ENCODE measurements at regions of chr4 and their contacts with region 1.

Region 1: DNA sequence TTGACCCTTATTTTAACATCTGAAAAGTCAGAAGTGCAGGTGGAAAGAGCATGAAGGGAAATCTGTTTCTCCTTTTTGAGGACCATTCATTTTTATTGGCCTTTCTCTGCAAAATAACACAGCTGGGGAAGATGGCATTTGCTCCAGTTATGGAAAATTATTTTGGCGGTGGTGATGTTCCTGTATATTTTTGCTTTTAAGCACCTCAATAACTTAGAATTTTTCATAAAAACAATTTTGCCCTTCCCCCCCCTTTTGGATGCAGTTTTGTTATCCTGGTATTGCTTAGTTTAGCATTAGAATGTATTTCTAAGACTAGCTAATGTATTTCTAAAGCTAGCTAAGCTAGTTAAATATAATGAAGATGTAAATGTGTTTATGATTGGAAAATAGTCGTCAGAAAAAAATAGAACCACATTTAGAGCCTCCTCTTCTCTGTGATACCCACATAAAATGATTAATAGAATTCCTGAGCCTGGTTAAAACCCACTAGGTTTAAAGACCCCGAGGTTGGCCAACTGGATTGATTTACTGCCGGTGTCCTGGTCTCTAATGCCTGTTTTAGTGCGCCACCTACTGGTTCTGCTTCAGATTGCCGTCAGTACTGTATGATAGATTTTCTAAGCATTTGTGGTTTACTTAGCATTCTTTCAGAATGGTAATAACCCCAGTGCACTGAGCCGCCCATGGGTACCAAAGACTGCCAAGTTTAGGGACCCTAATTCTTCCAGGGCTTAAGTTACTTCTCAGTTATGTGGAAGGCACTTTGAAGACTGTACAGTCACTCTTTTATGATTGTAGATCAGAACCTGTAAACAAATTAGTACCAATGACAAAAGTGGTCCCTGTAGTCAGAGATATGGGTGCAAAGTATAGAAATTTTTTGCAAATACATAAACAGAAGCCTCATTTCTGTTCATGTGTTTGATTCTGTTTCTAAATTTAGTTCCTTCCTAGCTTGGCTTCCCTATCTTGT is 11.4 kb downstream of the KLF3 start:
- DNase-seq: peak; percentile 67 to 79 (median 75)
- H3K4me3 ChIP-seq: peak overlapping the region in 1 of 3 experiments; percentile 29
- H3K4me3 Mint-ChIP-seq: peak overlapping the region in 1 of 2 donors; percentile 58
- H3K27ac ChIP-seq: peak overlapping the region in 1 of 2 donors; percentile 62
- H3K27ac Mint-ChIP-seq: peak overlapping the region in 6 of 7 donors; percentile 56 to 88 (median 69)
- H3K4me1 ChIP-seq: peaks cover 55 to 68% of the 10 kb centered on the region in 2 donors
- H3K4me1 Mint-ChIP-seq: peaks cover 68% of the 10 kb centered on the region
- H3K27me3 ChIP-seq: no peaks in the 10 kb centered on the region
- H3K27me3 Mint-ChIP-seq: no peaks in the 10 kb centered on the region
- CTCF ChIP-seq: peak; percentile 94

Region 2: GRCh38 chr4:38160487-38161207 is 514.8 kb before region 1 on chr4:
- intact Hi-C with region 1: loop called in 1 of 2 experiments (anchors 5 kb)
- DNase-seq: peak; percentile 92 to 98 (median 97)
- H3K4me3 ChIP-seq: no peak overlapping the region
- H3K4me3 Mint-ChIP-seq: no peak overlapping the region
- H3K27ac ChIP-seq: peak overlapping the region; percentile 94 to 97
- H3K27ac Mint-ChIP-seq: peak overlapping the region; percentile 96 to 100 (median 99)
- H3K4me1 ChIP-seq: peaks cover 54 to 55% of the 10 kb centered on the region in 2 donors
- H3K4me1 Mint-ChIP-seq: peaks cover 57% of the 10 kb centered on the region
- H3K27me3 ChIP-seq: no peaks in the 10 kb centered on the region
- H3K27me3 Mint-ChIP-seq: peaks cover 0 to 4% (median 2%) of the 10 kb centered on the region in 3 donors
- CTCF ChIP-seq: no peak

Region 3: GRCh38 chr4:38179690-38180377 is 495.6 kb before region 1 on chr4:
- intact Hi-C with region 1: loop called (anchors 2 to 5 kb)
- DNase-seq: peak; percentile 61 to 74 (median 65)
- H3K4me3 ChIP-seq: no peak overlapping the region
- H3K4me3 Mint-ChIP-seq: no peak overlapping the region
- H3K27ac ChIP-seq: no peak overlapping the region
- H3K27ac Mint-ChIP-seq: peak overlapping the region in 2 of 7 donors; percentile 24 to 56
- H3K4me1 ChIP-seq: peaks cover 33% of the 10 kb centered on the region in 2 donors
- H3K4me1 Mint-ChIP-seq: peaks cover 34% of the 10 kb centered on the region
- H3K27me3 ChIP-seq: no peaks in the 10 kb centered on the region
- H3K27me3 Mint-ChIP-seq: peaks cover 0 to 2% (median 2%) of the 10 kb centered on the region in 3 donors
- CTCF ChIP-seq: peak; percentile 96

Region 4: GRCh38 chr4:38319456-38320342 is 355.7 kb before region 1 on chr4:
- intact Hi-C with region 1: loop called (anchors 2 kb)
- DNase-seq: peak; percentile 76 to 83 (median 77)
- H3K4me3 ChIP-seq: peak overlapping the region in 1 of 3 experiments; percentile 74
- H3K4me3 Mint-ChIP-seq: peak overlapping the region; percentile 68 to 84
- H3K27ac ChIP-seq: peak overlapping the region; percentile 79 to 87
- H3K27ac Mint-ChIP-seq: peak overlapping the region; percentile 87 to 95 (median 91)
- H3K4me1 ChIP-seq: peaks cover 44 to 59% of the 10 kb centered on the region in 2 donors
- H3K4me1 Mint-ChIP-seq: peaks cover 48% of the 10 kb centered on the region
- H3K27me3 ChIP-seq: no peaks in the 10 kb centered on the region
- H3K27me3 Mint-ChIP-seq: peaks cover 0 to 2% (median 0%) of the 10 kb centered on the region in 3 donors
- CTCF ChIP-seq: peak; percentile 99

Region 5: DNA sequence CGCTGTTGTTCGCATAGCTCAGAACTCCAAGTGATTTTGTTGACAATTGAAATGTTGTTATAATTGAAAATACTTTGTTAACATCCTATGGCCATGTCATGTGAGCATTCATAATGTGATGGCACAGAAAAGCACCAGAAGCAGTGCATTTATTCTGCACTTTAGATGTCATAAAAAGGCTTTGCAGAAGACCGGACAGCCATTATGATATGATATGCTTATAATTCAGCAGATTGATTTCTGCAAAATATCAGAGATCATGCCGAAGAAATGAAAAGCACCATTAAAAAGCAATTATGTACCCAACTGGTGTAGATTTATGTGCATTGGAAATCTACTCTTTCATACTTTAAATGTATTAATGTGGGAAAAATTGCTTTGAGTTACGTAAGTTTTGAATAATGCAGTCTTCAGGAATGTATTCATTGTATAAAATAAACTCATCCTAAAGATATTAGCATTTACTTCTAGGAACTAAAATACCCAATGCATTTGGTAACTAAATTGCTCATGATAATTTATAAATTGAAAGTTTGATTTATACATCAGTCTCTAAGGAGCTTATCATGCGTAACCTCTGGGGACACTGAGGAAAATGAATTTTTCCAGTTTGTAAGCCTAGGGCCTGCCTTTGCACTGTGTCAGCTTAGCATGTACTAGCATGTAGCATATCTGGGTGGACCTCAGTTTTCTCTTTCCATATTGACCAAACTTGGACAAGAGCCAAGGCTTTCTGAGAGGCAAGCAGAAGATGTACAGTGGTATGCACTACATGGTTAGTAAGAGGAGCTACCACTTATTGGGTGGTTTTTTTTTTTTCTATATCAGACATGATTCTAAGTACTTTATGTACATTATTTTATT is 63.7 kb after region 1 on chr4:
- intact Hi-C with region 1: no loop called
- DNase-seq: no peak
- H3K4me3 ChIP-seq: no peak overlapping the region
- H3K4me3 Mint-ChIP-seq: no peak overlapping the region
- H3K27ac ChIP-seq: no peak overlapping the region
- H3K27ac Mint-ChIP-seq: no peak overlapping the region
- H3K4me1 ChIP-seq: peaks cover 14 to 29% of the 10 kb centered on the region in 2 donors
- H3K4me1 Mint-ChIP-seq: peaks cover 27% of the 10 kb centered on the region
- H3K27me3 ChIP-seq: no peaks in the 10 kb centered on the region
- H3K27me3 Mint-ChIP-seq: peaks cover 0 to 3% (median 2%) of the 10 kb centered on the region in 3 donors
- CTCF ChIP-seq: no peak

Measured in CD14-positive monocyte (primary cell).